Activated naive CD4-positive, alpha-beta T cell treated with anti-CD3 and anti-CD28 coated beads, Interleukin-2, amount 10 ng/mL, durations not matched to agents 7 days and 5 days (primary cell): ENCODE measurements at regions of chr1 and their contacts with region 1.

Region 1: DNA sequence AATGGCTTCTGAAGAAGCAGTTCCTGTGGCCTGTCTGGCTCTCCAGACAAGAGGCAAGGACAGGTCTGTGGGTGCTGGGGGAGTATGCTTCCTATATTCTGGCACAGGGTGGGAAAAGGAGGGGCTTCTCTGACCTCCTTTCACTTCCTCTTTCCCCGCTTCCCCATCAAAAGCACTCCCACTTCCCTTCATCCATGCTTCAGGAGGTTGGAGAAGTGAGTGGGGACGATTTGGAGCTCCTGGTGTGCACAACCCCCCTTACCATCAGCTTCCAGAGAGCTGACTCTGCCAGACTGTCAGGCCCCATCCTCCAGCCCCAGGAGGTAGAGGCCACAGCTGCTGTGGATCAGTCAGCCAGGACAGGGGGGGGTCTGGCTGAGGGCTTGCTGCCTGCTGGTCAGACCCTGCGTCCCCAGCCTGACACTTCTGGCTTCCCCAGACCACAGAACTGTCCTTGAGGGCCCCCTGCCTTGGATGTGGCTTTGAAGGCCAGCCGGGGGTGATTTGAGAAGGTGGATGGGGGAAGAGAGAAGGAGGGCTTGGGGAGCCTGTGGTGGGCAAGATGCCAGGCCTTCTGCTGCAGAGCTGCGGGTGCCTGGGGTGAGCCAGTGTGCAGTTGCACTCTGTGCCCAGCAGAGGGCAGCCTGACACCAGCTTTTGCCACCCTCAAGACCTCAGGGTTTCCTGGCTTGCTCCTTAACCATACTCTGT is 21.5 kb upstream of the TMEM222 start:
- DNase-seq: peak; percentile 80
- H3K4me3 Mint-ChIP-seq: no peak overlapping the region
- H3K27ac Mint-ChIP-seq: no peak overlapping the region
- H3K4me1 Mint-ChIP-seq: no peaks in the 10 kb centered on the region
- H3K27me3 Mint-ChIP-seq: no peaks in the 10 kb centered on the region

Region 2: GRCh38 chr1:27097484-27097917 is 203.0 kb before region 1 on chr1:
- CTCF ChIA-PET with region 1: interaction called, 89 read pairs
- DNase-seq: peak; percentile 82
- H3K4me3 Mint-ChIP-seq: no peak overlapping the region
- H3K27ac Mint-ChIP-seq: peak overlapping the region; percentile 6
- H3K4me1 Mint-ChIP-seq: peaks cover 5% of the 10 kb centered on the region
- H3K27me3 Mint-ChIP-seq: peaks cover 4% of the 10 kb centered on the region

Region 3: DNA sequence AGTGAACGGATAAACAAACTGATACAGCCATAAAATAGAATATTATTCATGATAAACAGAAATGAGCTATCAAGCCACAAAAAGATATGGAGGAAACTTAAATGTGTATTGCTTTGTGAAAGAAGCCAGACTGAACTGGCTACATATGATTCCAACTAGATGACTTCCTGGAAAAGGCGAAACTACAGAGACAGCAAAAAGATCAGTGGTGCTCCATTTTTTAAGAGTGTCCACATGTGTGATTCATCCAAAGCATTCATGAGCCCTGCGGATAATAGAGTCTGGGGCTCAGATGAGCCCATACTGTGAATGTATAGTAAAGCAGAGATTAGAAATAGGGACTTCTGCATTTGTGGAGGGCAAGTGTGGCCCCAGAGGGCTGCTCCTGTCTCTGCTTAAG is 13.7 kb after region 1 on chr1:
- CTCF ChIA-PET with region 1: interaction called, 31 read pairs
- DNase-seq: no peak
- H3K4me3 Mint-ChIP-seq: no peak overlapping the region
- H3K27ac Mint-ChIP-seq: no peak overlapping the region
- H3K4me1 Mint-ChIP-seq: no peaks in the 10 kb centered on the region
- H3K27me3 Mint-ChIP-seq: peaks cover 24% of the 10 kb centered on the region

Region 4: DNA sequence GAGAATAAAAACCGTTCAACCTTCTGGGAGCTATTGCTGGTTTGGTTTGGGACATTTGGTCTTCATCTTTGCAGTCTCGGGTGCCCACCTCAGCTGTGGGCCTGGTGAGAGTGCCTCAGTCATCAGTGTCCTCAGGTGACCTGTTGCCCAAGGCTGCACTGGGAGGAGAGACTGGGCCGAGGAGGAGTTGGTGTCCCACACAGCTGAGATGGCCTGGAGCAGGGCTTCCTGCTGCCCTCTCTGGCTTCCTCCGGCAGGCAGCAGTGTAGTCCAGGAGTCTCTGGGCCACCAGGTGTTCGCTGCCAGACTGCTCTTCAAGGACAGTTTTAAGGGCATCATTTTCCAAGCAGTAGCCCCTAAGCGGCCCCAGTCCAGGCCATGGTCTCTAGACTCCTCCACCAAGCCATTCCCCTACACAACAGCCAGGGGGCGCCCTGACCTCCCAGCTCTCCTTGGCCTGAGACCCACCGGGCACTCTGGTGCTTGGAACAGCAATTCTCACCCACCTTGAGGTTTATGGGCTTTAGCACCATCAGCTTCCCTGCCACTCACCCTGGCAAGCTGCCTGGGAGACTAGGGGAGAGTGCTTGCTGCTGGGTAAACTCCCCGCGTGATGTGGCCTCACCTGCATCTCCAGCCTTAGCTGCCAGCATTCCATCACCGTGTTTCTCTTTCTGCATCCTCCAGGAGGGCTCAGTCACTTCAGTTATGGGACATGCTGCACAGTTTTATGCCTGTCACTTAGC is 32.2 kb after region 1 on chr1:
- CTCF ChIA-PET with region 1: interaction called, 23 read pairs
- DNase-seq: peak; percentile 73
- H3K4me3 Mint-ChIP-seq: no peak overlapping the region
- H3K27ac Mint-ChIP-seq: peak overlapping the region; percentile 77
- H3K4me1 Mint-ChIP-seq: peaks cover 39% of the 10 kb centered on the region
- H3K27me3 Mint-ChIP-seq: no peaks in the 10 kb centered on the region

Region 5: GRCh38 chr1:27357281-27358037 is 57.0 kb after region 1 on chr1:
- CTCF ChIA-PET with region 1: interaction called, 25 read pairs
- DNase-seq: peak; percentile 87
- H3K4me3 Mint-ChIP-seq: peak overlapping the region; percentile 67
- H3K27ac Mint-ChIP-seq: peak overlapping the region; percentile 88
- H3K4me1 Mint-ChIP-seq: peaks cover 41% of the 10 kb centered on the region
- H3K27me3 Mint-ChIP-seq: peaks cover 39% of the 10 kb centered on the region

Region 6: DNA sequence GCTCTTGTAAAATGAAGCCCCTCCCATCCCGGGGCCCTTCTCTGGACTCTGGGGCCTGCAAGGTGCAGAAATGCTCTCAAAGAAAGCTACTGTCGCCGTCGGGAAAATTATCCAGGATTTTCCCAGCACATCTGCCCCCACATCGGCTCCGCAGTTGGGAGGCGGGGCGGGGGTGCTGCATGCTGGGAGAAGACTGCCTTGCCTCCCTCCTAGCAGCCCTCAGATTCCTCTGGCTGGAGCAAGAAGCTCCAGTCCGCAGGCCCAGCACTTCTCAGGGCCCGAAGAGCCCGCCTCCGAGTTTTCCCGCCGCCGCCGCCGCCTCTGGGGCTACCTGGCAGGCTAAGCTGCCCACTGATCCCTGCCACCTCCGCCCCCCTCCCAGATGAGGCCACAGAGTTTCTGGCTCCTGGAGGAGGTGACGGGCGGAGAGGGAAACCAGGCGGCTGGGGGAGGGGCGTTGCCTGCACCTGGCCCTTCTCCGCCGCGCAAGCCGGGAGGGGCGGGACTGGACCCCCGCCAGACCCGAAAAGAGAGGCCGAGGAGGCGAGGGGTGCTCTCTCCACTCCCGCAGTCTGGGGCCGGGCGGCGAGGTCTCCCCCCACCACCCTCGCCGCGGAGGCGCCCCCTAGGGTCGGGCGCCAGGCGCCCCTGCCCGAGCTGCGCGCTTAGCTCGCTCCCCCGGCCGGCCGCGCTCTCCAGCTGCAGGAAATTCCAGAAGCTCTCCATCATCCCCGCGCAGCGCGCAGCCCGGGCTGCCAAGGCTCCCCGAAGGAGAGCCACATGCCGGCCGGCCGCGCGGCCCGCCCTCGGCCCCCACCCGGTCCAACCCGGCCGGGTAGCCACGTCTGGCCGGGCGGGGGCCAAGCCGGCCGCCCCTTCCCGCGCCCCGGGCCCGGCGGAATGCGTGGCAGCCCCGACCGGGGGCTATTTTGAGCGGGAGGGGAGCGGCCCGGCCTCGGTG is 274.7 kb after region 1 on chr1:
- CTCF ChIA-PET with region 1: no interaction called
- DNase-seq: no peak
- H3K4me3 Mint-ChIP-seq: no peak overlapping the region
- H3K27ac Mint-ChIP-seq: no peak overlapping the region
- H3K4me1 Mint-ChIP-seq: peaks cover 9% of the 10 kb centered on the region
- H3K27me3 Mint-ChIP-seq: peaks cover 59% of the 10 kb centered on the region

Region 7: DNA sequence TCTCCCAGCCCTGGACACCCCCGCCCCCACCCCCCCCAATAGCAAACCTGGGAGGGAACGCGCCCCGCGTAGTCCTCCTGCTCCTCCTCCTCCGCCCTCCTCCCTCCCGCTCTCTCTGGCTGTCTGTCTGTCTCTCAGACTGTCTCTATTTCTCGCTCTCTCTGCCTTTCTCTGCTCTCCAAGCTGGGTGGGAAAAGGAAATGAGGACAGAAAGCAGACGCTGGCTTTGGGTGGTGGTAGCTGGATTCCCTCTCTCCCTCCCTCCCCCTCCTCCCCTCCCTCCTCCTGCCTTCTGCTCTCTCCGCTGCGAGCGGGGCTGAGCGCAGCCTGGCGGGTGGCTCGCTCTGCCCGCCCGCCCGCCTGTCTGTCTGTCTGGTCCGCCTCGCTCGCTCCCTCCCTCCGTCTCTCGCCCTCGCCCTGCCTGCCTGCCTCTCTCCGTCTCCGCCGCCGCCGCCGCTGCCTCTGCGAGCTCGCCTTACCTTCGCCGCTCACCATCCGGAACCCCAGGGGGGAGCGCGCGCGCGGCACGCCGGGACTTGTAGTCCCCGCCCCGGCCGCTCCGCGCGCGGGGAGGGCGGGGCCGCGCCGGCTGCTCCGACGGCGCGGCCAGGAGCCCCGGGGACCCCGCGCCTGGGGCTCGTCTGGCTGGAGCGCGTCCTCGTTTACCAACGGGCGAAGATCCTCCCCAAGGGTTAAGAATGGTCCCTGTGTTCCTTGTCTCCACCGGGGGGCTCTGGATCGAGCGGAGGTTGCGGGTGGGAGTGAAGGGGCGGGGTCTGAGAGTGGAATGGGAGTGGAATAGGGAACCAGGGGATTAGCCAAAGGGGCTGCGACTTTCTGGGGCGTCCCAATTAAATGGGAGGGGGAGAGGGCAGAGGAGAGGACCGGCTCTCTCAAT is 303.4 kb after region 1 on chr1 and contains the start of gene AHDC1:
- CTCF ChIA-PET with region 1: interaction called, 31 read pairs
- DNase-seq: peak; percentile 95
- H3K4me3 Mint-ChIP-seq: peak within 1 kb of the TSS; percentile 96
- H3K27ac Mint-ChIP-seq: peak within 1 kb of the TSS; percentile 88
- H3K4me1 Mint-ChIP-seq: peaks cover 52% of the 10 kb centered on the region
- H3K27me3 Mint-ChIP-seq: peaks cover 21% of the 10 kb centered on the region